ENCODE measurements at regions of chr6 and their contacts with region 1.

Region 1: GRCh38 chr6:43616725-43617472 is 12.2 kb downstream of the GTPBP2 start:
- DNase-seq: no peak
- ATAC-seq: no peak
- H3K4me3 ChIP-seq: no peak overlapping the region
- H3K27ac ChIP-seq: no peak overlapping the region
- H3K4me1 ChIP-seq: no peaks in the 10 kb centered on the region
- H3K27me3 ChIP-seq: no peaks in the 10 kb centered on the region
- CTCF ChIP-seq: no peak
- POLR2A ChIP-seq: no peak
- RAD21 ChIP-seq: no peak

Region 2: GRCh38 chr6:43221046-43221972 is 395.6 kb before region 1 on chr6:
- CTCF ChIA-PET with region 1: no interaction called
- POLR2A ChIA-PET with region 1: no interaction called
- RAD21 ChIA-PET with region 1: no interaction called
- intact Hi-C with region 1: no loop called
- DNase-seq: no peak
- ATAC-seq: no peak
- H3K4me3 ChIP-seq: no peak overlapping the region
- H3K27ac ChIP-seq: no peak overlapping the region
- H3K4me1 ChIP-seq: peaks cover 0 to 1% of the 10 kb centered on the region in 2 experiments; a peak in 1 of 4 replicates
- H3K27me3 ChIP-seq: no peaks in the 10 kb centered on the region
- CTCF ChIP-seq: no peak
- POLR2A ChIP-seq: no peak
- RAD21 ChIP-seq: no peak

Region 3: GRCh38 chr6:43629505-43630300 is 12.8 kb after region 1 on chr6:
- CTCF ChIA-PET with region 1: no interaction called
- POLR2A ChIA-PET with region 1: interaction called, 43 read pairs
- RAD21 ChIA-PET with region 1: no interaction called
- intact Hi-C with region 1: no loop called
- DNase-seq: peak; percentile 95
- ATAC-seq: peak; percentile 80
- H3K4me3 ChIP-seq: peak overlapping the region; percentile 80 to 100
- H3K27ac ChIP-seq: peak overlapping the region; percentile 86
- H3K4me1 ChIP-seq: peaks cover 20 to 39% of the 10 kb centered on the region in 2 experiments
- H3K27me3 ChIP-seq: no peaks in the 10 kb centered on the region
- CTCF ChIP-seq: no peak
- POLR2A ChIP-seq: peak; percentile 80
- RAD21 ChIP-seq: no peak

Measured in HCT116 (cell line).